Activated CD4-positive, alpha-beta T cell treated with anti-CD3 and anti-CD28 coated beads for 36 hours (primary cell): ENCODE measurements at regions of chr7 and their contacts with region 1.

Region 1: GRCh38 chr7:44999245-45000095 is 531 bp upstream of the CCM2 start:
- DNase-seq: peak; percentile 100
- ATAC-seq: peak; percentile 88
- H3K4me3 Mint-ChIP-seq: peak overlapping the region; percentile 91
- H3K27ac Mint-ChIP-seq: peak overlapping the region; percentile 91
- H3K4me1 Mint-ChIP-seq: peaks cover 56% of the 10 kb centered on the region
- H3K27me3 Mint-ChIP-seq: no peaks in the 10 kb centered on the region

Region 2: DNA sequence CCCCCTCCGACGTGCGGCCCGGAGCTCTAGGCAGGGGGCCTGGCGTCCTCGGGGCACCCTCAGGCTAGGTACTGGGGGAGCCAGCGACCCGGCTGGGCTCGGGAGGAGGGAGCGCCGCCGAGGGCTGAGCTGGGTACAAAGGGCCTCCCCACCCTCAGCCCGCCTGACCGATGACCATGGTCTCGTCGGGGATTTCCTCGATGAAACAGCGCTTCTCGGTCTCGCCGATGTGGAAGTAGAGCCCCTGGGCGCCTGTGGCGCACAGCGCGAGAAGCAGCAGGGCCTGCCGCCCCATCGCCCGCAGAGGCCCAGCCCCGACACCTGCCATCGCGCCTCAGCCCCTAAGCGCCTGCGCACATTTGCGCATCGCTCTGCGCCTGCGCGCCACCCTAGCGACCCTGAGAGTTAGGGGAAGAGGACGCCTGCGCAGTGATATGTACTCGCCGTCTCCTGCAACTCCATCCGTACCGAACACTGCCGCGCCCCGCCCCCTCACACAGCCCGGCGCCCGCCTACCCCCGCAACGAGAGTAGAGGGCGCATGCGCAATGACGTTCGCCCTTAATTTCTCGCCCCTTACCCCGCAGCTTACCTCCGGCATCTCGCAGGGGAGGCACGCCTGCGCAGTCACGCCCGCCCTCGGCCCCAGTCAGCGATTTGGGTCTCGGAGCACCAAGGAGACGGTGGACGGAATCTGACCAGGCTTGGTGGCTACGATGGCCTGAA is 417.4 kb before region 1 on chr7 and contains the start of gene TMED4:
- CTCF ChIA-PET with region 1: no interaction called
- POLR2A ChIA-PET with region 1: interaction called, 3 read pairs
- intact Hi-C with region 1: loop called (anchors 1 to 2 kb)
- DNase-seq: peak; percentile 100
- ATAC-seq: peak; percentile 95
- H3K4me3 Mint-ChIP-seq: peak within 1 kb of the TSS; percentile 85
- H3K27ac Mint-ChIP-seq: peak within 1 kb of the TSS; percentile 92
- H3K4me1 Mint-ChIP-seq: peaks cover 33% of the 10 kb centered on the region
- H3K27me3 Mint-ChIP-seq: no peaks in the 10 kb centered on the region
- total RNA-seq, gene TMED4: 71.6 to 73.0 TPM

Region 3: DNA sequence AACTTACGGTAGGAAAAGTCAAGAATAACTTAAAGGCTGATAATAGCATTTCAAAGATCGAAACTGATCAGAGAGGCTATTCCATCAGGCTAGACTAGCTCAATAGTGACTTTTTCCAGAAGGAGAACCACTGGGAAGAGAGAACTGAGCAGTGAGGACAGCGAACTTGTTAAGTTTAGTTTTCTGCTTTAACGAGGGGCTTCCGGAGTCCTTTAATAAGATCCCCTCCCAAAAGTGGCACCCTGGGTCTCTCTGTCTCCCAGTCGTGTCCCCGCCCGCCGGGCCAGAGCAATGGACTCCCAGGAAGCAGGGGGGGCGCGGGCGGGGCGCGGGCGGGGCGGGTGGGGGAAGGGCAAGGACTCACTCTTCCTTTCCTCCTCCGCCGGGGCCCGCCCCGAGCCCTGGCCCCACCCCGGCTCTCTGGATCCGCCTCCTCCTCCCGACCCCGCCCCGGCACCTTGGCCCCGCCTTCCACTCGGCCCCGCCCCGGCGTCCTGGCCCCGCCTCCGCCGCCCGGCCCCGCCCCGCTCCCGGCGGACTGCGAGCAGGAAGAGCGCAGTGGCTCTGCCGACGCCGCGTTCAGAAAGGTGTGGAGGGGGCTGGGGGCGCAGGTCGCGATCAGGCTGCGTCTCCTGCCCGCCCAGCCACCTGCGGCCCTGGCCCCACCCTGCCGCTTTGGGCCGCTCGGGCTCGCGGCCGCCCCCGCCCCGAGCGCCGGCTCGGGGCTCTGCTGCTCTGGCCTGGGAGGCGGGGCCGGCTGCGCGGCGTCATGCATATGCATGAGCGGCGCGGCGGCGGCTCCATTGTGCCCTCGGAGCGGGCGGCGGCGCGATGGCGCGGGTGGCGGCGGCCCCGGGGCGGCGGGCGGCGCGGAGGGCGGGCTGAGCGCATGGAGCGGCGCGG is 251.2 kb before region 1 on chr7 and contains the start of gene ZMIZ2:
- CTCF ChIA-PET with region 1: no interaction called
- POLR2A ChIA-PET with region 1: interaction called, 3 read pairs
- intact Hi-C with region 1: loop called (anchors 1 kb)
- DNase-seq: peak; percentile 97
- ATAC-seq: peak; percentile 87
- H3K4me3 Mint-ChIP-seq: peak within 1 kb of the TSS; percentile 78
- H3K27ac Mint-ChIP-seq: peak within 1 kb of the TSS; percentile 97
- H3K4me1 Mint-ChIP-seq: peaks cover 31% of the 10 kb centered on the region
- H3K27me3 Mint-ChIP-seq: no peaks in the 10 kb centered on the region
- total RNA-seq, gene ZMIZ2: 82.8 to 106 TPM

Region 4: GRCh38 chr7:44980393-44981034 is 19.0 kb before region 1 on chr7:
- CTCF ChIA-PET with region 1: interaction called, 28 read pairs
- POLR2A ChIA-PET with region 1: interaction called, 99 read pairs
- intact Hi-C with region 1: loop called (anchors 1 kb)
- DNase-seq: peak; percentile 94
- ATAC-seq: peak; percentile 48
- H3K4me3 Mint-ChIP-seq: peak overlapping the region; percentile 99
- H3K27ac Mint-ChIP-seq: peak overlapping the region; percentile 99
- H3K4me1 Mint-ChIP-seq: peaks cover 68% of the 10 kb centered on the region
- H3K27me3 Mint-ChIP-seq: no peaks in the 10 kb centered on the region

Region 5: DNA sequence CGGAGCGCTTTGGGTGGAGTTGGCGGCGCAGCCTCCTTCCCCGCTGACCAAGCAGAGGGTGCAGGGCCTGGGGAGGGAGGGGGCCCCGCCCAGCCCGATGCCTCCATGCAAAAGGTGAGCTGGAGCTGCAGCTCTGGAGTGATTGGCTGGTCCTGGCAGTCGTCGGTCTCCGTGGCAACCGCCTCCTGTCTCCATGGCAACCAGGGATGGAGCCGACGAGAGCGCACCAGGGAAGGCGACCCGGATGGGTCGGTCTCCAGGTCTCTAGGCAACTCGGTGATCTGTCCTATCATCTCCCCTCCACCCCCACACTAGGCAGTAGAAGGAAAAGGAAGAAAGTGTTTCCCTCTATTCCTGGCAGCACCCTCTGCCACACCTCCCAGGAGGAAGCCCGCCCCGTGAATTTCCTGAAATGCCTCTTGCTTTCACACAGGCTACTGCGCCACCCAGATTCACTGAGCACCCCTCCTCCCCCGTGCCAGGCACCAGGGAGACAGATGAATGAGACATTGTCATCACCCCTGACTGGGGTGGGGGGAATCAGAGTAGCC is 89.9 kb after region 1 on chr7:
- CTCF ChIA-PET with region 1: no interaction called
- POLR2A ChIA-PET with region 1: interaction called, 4 read pairs
- intact Hi-C with region 1: loop called in 1 of 2 experiments (anchors 1 kb)
- DNase-seq: peak; percentile 85
- ATAC-seq: peak; percentile 78
- H3K4me3 Mint-ChIP-seq: peak overlapping the region; percentile 66
- H3K27ac Mint-ChIP-seq: no peak overlapping the region
- H3K4me1 Mint-ChIP-seq: peaks cover 5% of the 10 kb centered on the region
- H3K27me3 Mint-ChIP-seq: peaks cover 8% of the 10 kb centered on the region

Region 6: GRCh38 chr7:45196374-45196773 is 196.9 kb after region 1 on chr7:
- CTCF ChIA-PET with region 1: no interaction called
- POLR2A ChIA-PET with region 1: no interaction called
- intact Hi-C with region 1: loop called in 1 of 2 experiments (anchors 1 kb)
- DNase-seq: peak; percentile 81
- ATAC-seq: peak; percentile 98
- H3K4me3 Mint-ChIP-seq: no peak overlapping the region
- H3K27ac Mint-ChIP-seq: no peak overlapping the region
- H3K4me1 Mint-ChIP-seq: peaks cover 23% of the 10 kb centered on the region
- H3K27me3 Mint-ChIP-seq: peaks cover 26% of the 10 kb centered on the region

Region 7: DNA sequence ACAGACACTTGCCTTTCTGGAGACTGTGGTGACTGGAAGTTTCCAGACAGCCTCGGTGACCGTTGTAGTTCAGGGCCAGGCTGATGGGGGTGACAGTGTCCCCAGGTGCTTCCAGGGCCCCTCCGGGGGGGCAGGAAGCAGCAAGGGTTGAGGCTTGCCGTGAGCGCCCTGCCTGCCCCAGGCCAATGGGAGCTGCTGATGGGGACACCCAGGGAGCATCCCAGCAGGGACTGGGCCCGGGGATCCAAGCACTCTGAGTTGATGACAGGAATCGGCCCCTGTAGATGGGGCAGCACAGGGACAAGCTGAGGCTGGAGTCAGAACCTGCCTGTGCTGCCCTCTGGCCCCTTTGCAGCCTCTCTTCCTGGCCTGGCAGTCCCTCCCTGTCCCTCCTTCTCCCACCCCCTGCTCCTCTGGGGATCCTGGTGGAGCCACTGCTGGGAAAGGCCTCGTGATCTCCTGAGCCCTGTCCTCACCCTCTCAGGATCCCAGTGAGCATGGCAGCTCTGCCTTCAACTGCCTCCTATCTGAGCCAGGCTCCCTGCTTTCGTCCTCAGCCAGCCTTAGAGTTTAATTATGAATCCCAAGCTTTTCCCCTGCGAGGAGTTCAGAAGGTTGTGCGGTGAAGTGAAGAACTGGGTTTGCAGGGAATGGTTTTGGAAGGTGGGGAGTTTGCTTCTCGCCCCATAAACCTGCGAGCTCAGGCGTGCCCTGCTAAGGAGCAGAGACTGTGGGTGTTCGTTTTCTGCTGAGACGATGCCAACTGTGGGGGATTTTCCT is 659.4 kb after region 1 on chr7:
- CTCF ChIA-PET with region 1: no interaction called
- POLR2A ChIA-PET with region 1: no interaction called
- intact Hi-C with region 1: no loop called
- DNase-seq: no peak
- ATAC-seq: no peak
- H3K4me3 Mint-ChIP-seq: no peak overlapping the region
- H3K27ac Mint-ChIP-seq: no peak overlapping the region
- H3K4me1 Mint-ChIP-seq: no peaks in the 10 kb centered on the region
- H3K27me3 Mint-ChIP-seq: peaks cover 2% of the 10 kb centered on the region